Head of caudate nucleus (tissue), 42 donors: ENCODE measurements at regions of chr9 and their contacts with region 1.

Region 1: GRCh38 chr9:21812946-21813568 is 10.6 kb downstream of the MTAP start:
- DNase-seq: peak in 41 of 42 donors; percentile 52 to 93 (median 79)

Region 2: GRCh38 chr9:21747181-21747580 is 65.9 kb before region 1 on chr9:
- intact Hi-C with region 1: no loop called
- DNase-seq: no peak

Region 3: DNA sequence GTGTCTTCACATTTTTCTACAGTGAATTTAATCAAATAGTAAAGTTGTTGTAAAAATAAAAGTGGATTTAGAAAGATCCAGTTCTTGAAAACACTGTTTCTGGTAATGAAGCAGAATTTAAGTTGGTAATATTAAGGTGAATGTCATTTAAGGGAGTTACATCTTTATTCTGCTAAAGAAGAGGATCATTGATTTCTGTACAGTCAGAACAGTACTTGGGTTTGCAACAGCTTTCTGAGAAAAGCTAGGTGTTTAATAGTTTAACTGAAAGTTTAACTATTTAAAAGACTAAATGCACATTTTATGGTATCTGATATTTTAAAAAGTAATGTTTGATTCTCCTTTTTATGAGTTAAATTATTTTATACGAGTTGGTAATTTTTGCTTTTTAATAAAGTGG is 49.8 kb after region 1 on chr9:
- intact Hi-C with region 1: no loop called
- DNase-seq: no peak

Region 4: GRCh38 chr9:21995177-21996086 is 182.4 kb after region 1 on chr9:
- intact Hi-C with region 1: loop called (anchors 10 kb)
- DNase-seq: peak in 39 of 42 donors; percentile 41 to 83 (median 62)

Region 5: GRCh38 chr9:22037954-22038690 is 225.1 kb after region 1 on chr9:
- intact Hi-C with region 1: loop called (anchors 10 kb)
- DNase-seq: no peak

Region 6: GRCh38 chr9:22244141-22245011 is 431.3 kb after region 1 on chr9:
- intact Hi-C with region 1: loop called (anchors 10 kb)
- DNase-seq: peak in 2 of 42 donors; percentile 8 to 24

Region 7: GRCh38 chr9:22446950-22447617 is 634.0 kb after region 1 on chr9:
- intact Hi-C with region 1: loop called (anchors 10 kb)
- DNase-seq: peak in 41 of 42 donors; percentile 17 to 83 (median 58)